ENCODE measurements at regions of chr3 and their contacts with region 1.

Region 1: GRCh38 chr3:172332256-172333041 is 115.8 kb downstream of the GHSR start:
- DNase-seq: peak; percentile 26
- ATAC-seq: peak; percentile 85
- H3K4me3 Mint-ChIP-seq: no peak overlapping the region
- H3K27ac Mint-ChIP-seq: no peak overlapping the region
- H3K4me1 Mint-ChIP-seq: no peaks in the 10 kb centered on the region
- H3K27me3 Mint-ChIP-seq: no peaks in the 10 kb centered on the region
- CTCF ChIP-seq: peak; percentile 97

Region 2: GRCh38 chr3:171846597-171846996 is 485.9 kb before region 1 on chr3:
- CTCF ChIA-PET with region 1: no interaction called
- POLR2A ChIA-PET with region 1: no interaction called
- intact Hi-C with region 1: loop called (anchors 10 kb)
- DNase-seq: no peak
- ATAC-seq: no peak
- H3K4me3 Mint-ChIP-seq: no peak overlapping the region
- H3K27ac Mint-ChIP-seq: no peak overlapping the region
- H3K4me1 Mint-ChIP-seq: no peaks in the 10 kb centered on the region
- H3K27me3 Mint-ChIP-seq: no peaks in the 10 kb centered on the region
- CTCF ChIP-seq: no peak

Region 3: DNA sequence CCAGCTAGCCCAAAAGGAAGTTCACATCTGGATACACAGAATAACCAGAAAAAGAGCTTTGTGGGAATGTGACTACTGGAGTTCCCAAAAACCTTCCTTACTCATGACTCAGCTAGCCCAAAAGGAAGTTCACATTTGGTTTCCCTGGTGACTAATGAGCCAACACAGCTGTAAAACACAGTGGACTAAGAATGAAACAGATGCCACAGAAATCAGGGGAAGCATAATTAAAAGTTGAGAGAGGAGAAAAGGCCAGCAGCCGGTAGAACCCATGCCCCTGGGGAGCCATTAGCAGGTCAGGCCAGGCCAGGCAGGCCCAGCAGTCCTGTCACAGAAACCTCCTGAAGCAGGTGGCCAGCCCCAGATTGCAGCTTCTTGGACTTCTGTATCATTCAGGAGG is 14.5 kb before region 1 on chr3:
- CTCF ChIA-PET with region 1: interaction called, 13 read pairs
- POLR2A ChIA-PET with region 1: no interaction called
- intact Hi-C with region 1: no loop called
- DNase-seq: no peak
- ATAC-seq: no peak
- H3K4me3 Mint-ChIP-seq: no peak overlapping the region
- H3K27ac Mint-ChIP-seq: no peak overlapping the region
- H3K4me1 Mint-ChIP-seq: no peaks in the 10 kb centered on the region
- H3K27me3 Mint-ChIP-seq: no peaks in the 10 kb centered on the region
- CTCF ChIP-seq: no peak

Region 4: DNA sequence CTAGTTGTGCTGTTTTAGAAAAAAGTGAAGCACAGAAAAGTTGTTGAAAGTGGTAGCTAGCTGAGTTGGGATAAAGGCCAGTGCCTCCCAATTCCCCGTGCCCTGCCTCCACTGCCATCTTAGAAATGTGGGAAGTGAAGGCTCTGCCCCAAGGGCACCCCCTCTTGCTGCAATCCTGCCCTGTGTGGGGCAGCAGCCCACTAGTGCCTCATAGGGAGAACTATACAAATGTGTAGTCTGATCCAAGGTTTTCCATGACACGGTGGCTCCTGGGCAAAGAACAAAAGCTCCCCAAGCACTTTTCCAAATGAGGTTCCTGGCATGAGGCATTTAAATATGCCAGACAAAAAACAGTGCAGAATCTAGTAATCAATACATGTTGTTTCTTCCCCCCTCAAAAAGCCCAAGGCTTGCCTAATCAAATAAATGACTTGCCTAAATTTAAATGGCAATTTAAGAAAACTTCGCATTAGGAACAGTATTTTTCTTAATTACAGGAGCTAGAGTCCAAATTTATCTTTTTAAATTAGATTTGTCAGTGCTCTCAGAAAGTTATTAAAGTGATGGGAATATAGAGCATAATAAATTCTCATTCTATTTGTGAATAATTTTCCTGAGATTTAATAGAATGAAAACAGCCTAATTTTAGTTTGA is 32.1 kb after region 1 on chr3:
- CTCF ChIA-PET with region 1: no interaction called
- POLR2A ChIA-PET with region 1: no interaction called
- intact Hi-C with region 1: no loop called
- DNase-seq: no peak
- ATAC-seq: no peak
- H3K4me3 Mint-ChIP-seq: no peak overlapping the region
- H3K27ac Mint-ChIP-seq: no peak overlapping the region
- H3K4me1 Mint-ChIP-seq: no peaks in the 10 kb centered on the region
- H3K27me3 Mint-ChIP-seq: no peaks in the 10 kb centered on the region
- CTCF ChIP-seq: no peak

Region 5: GRCh38 chr3:172476347-172476746 is 143.9 kb after region 1 on chr3:
- CTCF ChIA-PET with region 1: interaction called, 4 read pairs
- POLR2A ChIA-PET with region 1: no interaction called
- intact Hi-C with region 1: loop called (anchors 1 kb)
- DNase-seq: no peak
- ATAC-seq: no peak
- H3K4me3 Mint-ChIP-seq: no peak overlapping the region
- H3K27ac Mint-ChIP-seq: no peak overlapping the region
- H3K4me1 Mint-ChIP-seq: peaks cover 7% of the 10 kb centered on the region
- H3K27me3 Mint-ChIP-seq: peaks cover 5% of the 10 kb centered on the region
- CTCF ChIP-seq: no peak

Region 6: DNA sequence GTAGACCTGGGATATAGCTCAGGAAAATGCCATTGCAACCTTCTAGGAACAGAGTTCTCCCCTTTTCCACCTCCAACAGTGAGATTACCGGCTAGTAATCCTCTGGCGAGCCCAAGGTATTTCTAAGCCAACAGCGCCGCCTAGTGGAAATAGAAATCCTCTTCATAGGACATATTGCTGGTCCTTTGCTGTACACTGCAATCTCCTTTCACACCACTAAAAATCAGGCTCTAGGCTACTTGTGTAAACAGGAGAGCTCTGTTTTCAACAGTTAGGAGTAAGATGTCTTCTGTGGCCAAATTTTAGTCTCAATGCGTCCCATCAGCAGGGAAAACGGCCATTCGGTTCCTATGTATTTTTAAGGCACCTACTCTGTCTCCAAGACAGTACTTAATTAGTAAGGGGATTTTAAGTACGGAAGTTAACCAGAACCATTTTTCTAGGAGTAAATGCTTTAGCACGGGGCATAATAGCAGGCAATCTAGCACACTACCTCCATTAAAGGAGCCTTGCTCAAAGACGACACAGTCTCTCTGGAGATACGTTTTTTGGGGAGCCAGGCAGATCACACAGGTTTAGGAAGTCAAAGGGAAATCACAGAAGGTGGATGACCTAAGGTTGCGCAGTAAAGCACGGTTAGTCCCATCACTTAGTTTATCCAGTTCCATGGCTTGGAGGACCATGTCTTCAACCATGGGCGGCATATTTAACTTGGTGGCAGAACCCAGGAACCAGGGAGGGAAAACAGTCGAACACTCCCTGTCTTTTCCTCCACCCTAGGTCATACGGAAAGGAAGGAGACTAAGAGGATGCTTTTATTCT is 334.6 kb after region 1 on chr3:
- CTCF ChIA-PET with region 1: interaction called, 23 read pairs
- POLR2A ChIA-PET with region 1: no interaction called
- intact Hi-C with region 1: loop called (anchors 1 kb)
- DNase-seq: no peak
- ATAC-seq: peak; percentile 69
- H3K4me3 Mint-ChIP-seq: no peak overlapping the region
- H3K27ac Mint-ChIP-seq: no peak overlapping the region
- H3K4me1 Mint-ChIP-seq: peaks cover 14% of the 10 kb centered on the region
- H3K27me3 Mint-ChIP-seq: no peaks in the 10 kb centered on the region
- CTCF ChIP-seq: no peak

Measured in activated B cell treated with CpG ODN at 0.5 μM for 24 hours (primary cell).